Activated B cell treated with CpG ODN at 0.5 μM for 24 hours (primary cell): ENCODE measurements at regions of chr6 and their contacts with region 1.

Region 1: DNA sequence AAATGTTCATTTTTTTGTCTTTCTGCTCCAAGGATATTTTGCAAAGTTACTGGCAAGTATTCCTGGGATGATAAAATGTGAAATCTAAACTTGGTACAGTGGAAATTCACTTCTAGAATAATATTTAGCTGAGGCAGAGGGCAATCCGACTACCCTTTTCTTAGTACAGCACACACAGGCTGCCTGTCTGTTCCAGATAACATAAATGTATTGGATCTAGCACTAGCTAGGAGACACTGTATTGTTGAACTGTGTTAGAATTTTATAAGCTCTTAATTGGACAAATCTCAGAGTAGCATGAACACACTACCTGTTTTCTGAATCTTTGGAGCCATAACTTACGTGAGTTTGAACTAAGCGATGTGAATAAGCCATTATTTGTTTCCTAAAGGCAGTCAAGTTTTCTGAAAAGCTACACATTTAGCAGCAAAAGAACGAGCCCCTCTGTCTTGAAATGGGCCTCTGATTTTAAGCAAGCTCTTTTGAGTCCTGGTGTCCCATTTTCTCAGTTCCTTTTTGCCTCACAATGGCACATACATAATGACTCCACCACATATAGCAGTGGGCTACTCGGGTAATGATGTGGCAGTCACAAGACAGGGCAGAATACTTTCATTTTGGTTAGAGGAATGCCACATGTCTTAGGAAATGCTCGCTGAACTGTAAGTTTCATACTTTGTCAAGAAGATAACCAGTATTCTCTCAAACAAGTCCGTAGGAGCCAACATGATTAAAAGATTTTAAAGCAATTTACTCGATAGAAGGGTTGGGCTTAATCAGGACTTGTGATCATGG is 116.5 kb upstream of the ESR1 start:
- DNase-seq: no peak
- ATAC-seq: peak; percentile 89
- H3K4me3 Mint-ChIP-seq: peak overlapping the region; percentile 79
- H3K27ac Mint-ChIP-seq: peak overlapping the region; percentile 88
- H3K4me1 Mint-ChIP-seq: peaks cover 32% of the 10 kb centered on the region
- H3K27me3 Mint-ChIP-seq: no peaks in the 10 kb centered on the region
- CTCF ChIP-seq: no peak

Region 2: DNA sequence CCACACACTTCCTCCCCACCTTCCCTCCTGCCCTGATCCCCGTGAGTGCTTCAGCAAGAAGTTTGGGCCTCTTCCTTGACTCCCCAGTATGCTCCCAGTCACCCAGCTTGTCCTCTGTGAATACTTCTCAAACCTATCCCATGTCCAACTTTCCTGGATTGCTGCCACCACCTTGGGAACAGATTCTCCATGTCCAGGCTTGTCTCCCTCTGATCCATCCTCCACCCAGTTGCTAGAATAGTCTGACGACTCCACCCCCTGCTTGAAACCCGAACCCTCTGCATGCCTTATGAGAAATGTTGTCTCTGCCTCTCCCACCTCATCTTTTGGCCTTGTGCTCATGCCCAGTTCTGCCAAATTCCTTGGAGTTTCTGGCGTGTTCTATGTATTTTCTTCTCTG is 1440.1 kb before region 1 on chr6:
- CTCF ChIA-PET with region 1: no interaction called
- POLR2A ChIA-PET with region 1: no interaction called
- intact Hi-C with region 1: no loop called
- DNase-seq: no peak
- ATAC-seq: no peak
- H3K4me3 Mint-ChIP-seq: no peak overlapping the region
- H3K27ac Mint-ChIP-seq: no peak overlapping the region
- H3K4me1 Mint-ChIP-seq: no peaks in the 10 kb centered on the region
- H3K27me3 Mint-ChIP-seq: peaks cover 6% of the 10 kb centered on the region
- CTCF ChIP-seq: no peak

Region 3: DNA sequence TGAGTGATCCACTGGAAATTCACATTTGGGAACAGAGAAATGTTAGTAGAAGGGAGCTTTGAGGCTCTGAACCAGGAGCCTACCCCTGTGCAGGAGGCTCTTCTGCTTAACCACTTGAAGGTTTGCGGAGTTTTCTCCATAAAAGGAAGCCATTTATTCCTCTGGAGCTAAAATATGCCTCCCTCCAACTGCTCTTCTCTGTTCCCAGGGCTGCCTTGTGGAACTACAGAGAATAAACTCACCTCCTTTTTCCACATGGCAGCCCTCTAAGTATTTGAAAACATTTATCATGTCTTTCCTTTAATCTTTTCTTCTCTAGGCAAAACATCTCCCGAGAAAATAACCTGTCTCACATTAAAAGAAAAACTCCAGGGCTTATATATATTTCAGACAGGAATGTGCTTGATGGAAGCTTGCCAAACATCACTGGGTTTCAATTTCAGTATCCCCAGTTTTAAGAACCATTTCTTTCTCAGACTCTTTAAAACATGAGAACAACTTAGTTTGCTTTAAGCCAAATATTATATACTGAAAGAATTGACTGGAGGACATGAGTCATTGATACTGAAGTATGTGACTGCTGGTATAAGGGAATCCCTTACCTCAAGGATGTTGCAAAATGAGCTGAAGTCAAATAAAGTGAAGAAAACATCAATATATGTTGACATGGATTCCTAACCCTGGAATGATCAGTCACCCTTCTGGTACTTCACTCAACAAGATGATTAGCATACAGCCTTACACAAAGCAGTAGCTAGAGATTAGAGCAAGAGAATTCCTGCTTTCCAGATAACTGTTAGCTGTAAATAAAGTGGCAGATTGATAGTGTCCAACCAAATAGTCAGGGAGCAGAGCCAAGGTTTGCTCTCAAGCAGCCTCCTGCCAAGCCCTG is 373.6 kb before region 1 on chr6:
- CTCF ChIA-PET with region 1: no interaction called
- POLR2A ChIA-PET with region 1: no interaction called
- intact Hi-C with region 1: no loop called
- DNase-seq: no peak
- ATAC-seq: no peak
- H3K4me3 Mint-ChIP-seq: no peak overlapping the region
- H3K27ac Mint-ChIP-seq: no peak overlapping the region
- H3K4me1 Mint-ChIP-seq: no peaks in the 10 kb centered on the region
- H3K27me3 Mint-ChIP-seq: peaks cover 8% of the 10 kb centered on the region
- CTCF ChIP-seq: no peak

Region 4: GRCh38 chr6:151723152-151723551 is 32.2 kb after region 1 on chr6:
- CTCF ChIA-PET with region 1: interaction called, 3 read pairs
- POLR2A ChIA-PET with region 1: interaction called, 5 read pairs
- intact Hi-C with region 1: loop called (anchors 1 kb)
- DNase-seq: no peak
- ATAC-seq: peak; percentile 90
- H3K4me3 Mint-ChIP-seq: peak overlapping the region; percentile 41
- H3K27ac Mint-ChIP-seq: peak overlapping the region; percentile 75
- H3K4me1 Mint-ChIP-seq: peaks cover 32% of the 10 kb centered on the region
- H3K27me3 Mint-ChIP-seq: no peaks in the 10 kb centered on the region
- CTCF ChIP-seq: no peak

Region 5: DNA sequence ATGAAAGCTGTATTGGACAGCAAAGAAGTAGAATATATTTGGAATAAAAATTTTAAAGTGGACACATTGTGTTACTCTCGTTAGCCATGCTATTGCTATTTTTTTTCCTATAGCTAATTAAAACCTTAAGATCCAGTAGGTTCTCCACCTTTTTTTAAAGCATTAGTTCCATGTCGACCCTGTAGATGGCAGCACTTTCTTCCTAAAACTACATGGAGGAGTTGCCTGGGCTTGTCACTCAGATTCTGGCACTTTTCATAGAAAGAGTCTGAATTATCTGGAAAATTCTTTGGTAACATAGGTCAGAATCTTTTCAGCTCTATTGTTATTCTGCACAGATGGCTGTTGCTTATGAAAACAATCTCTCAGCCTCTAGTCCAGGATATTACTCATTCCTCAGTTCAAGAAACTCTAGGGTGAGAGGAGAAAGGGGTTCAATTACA is 74.5 kb after region 1 on chr6:
- CTCF ChIA-PET with region 1: interaction called, 40 read pairs
- POLR2A ChIA-PET with region 1: interaction called, 12 read pairs
- intact Hi-C with region 1: loop called (anchors 1 kb)
- DNase-seq: no peak
- ATAC-seq: peak; percentile 52
- H3K4me3 Mint-ChIP-seq: no peak overlapping the region
- H3K27ac Mint-ChIP-seq: no peak overlapping the region
- H3K4me1 Mint-ChIP-seq: peaks cover 26% of the 10 kb centered on the region
- H3K27me3 Mint-ChIP-seq: no peaks in the 10 kb centered on the region
- CTCF ChIP-seq: peak; percentile 26

Region 6: GRCh38 chr6:152124429-152125074 is 433.6 kb after region 1 on chr6:
- CTCF ChIA-PET with region 1: interaction called, 105 read pairs
- POLR2A ChIA-PET with region 1: interaction called, 24 read pairs
- intact Hi-C with region 1: loop called (anchors 1 kb)
- DNase-seq: no peak
- ATAC-seq: peak; percentile 74
- H3K4me3 Mint-ChIP-seq: no peak overlapping the region
- H3K27ac Mint-ChIP-seq: no peak overlapping the region
- H3K4me1 Mint-ChIP-seq: no peaks in the 10 kb centered on the region
- H3K27me3 Mint-ChIP-seq: no peaks in the 10 kb centered on the region
- CTCF ChIP-seq: peak; percentile 42

Region 7: GRCh38 chr6:152267967-152268845 is 577.2 kb after region 1 on chr6:
- CTCF ChIA-PET with region 1: interaction called, 14 read pairs
- POLR2A ChIA-PET with region 1: no interaction called
- intact Hi-C with region 1: loop called (anchors 1 kb)
- DNase-seq: no peak
- ATAC-seq: no peak
- H3K4me3 Mint-ChIP-seq: no peak overlapping the region
- H3K27ac Mint-ChIP-seq: no peak overlapping the region
- H3K4me1 Mint-ChIP-seq: no peaks in the 10 kb centered on the region
- H3K27me3 Mint-ChIP-seq: no peaks in the 10 kb centered on the region
- CTCF ChIP-seq: no peak